IMR-90 (cell line): ENCODE measurements at regions of chr1 and their contacts with region 1.

Region 1: GRCh38 chr1:97814121-97814520 is 106.7 kb downstream of the DPYD start:
- DNase-seq: peak; percentile 54
- ATAC-seq: peak; percentile 29
- H3K4me3 ChIP-seq: no peak overlapping the region
- H3K27ac ChIP-seq: no peak overlapping the region
- H3K4me1 ChIP-seq: peaks cover 2% of the 10 kb centered on the region; the same call in 1 of the 2 replicates
- H3K27me3 ChIP-seq: no peaks in the 10 kb centered on the region
- CTCF ChIP-seq: no peak
- POLR2A ChIP-seq: no peak
- RAD21 ChIP-seq: no peak

Region 2: DNA sequence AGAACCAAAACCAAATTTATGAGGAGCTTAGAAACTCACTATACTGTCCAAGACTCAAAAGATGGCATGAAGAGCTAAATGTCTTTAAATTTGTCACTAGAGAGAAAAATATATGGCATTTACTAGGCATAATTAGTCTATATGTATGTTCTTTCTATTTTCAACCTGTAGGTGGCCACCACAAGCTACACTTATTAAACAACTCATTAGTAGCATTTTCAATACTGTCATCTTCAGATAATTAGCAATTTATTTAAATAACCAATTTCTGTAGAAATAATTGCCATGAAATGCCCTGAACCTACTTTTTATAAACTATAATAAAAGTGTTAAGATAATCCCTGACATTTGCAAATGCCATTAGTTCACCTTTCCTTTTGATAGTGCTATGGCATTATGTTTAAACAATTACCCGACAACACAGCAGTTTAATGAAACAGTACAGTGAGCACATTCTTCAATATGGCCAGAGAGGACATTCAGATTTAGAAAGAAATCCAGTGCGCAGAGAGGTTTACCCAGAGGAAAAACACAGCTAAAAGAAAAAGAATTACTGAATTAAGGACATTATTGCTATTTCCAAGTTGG is 570.1 kb before region 1 on chr1:
- CTCF ChIA-PET with region 1: no interaction called
- POLR2A ChIA-PET with region 1: no interaction called
- dilution Hi-C with region 1: no loop called
- in situ Hi-C with region 1: loop called (anchors 25 kb)
- intact Hi-C with region 1: loop called (anchors 5 kb)
- DNase-seq: peak; percentile 29
- ATAC-seq: 0 out of 2 replicates have a peak, but pooled peaks have one; percentile 51
- H3K4me3 ChIP-seq: no peak overlapping the region
- H3K27ac ChIP-seq: no peak overlapping the region
- H3K4me1 ChIP-seq: no peaks in the 10 kb centered on the region
- H3K27me3 ChIP-seq: no peaks in the 10 kb centered on the region
- CTCF ChIP-seq: peak; percentile 55
- POLR2A ChIP-seq: no peak
- RAD21 ChIP-seq: peak; percentile 63

Region 3: DNA sequence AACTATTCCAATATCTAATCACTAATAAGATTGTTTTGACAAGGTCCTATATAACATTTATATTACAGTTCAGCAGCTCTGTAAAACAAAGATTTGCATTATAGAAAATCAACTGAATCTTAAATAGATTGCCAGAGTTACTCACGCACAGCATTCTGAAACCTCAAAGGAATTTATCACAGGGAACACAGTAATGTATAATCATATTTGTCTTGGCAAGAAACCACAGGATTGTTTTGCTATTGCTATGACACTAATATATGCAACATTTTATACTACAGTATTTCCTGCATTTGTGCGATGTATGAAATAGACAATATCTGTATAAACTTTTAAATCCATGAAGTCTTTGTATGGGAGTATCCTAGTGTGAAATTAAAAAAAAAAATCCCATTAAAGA is 1089.1 kb after region 1 on chr1:
- CTCF ChIA-PET with region 1: no interaction called
- POLR2A ChIA-PET with region 1: no interaction called
- dilution Hi-C with region 1: no loop called
- in situ Hi-C with region 1: no loop called
- intact Hi-C with region 1: no loop called
- DNase-seq: peak; percentile 88
- ATAC-seq: peak; percentile 89
- H3K4me3 ChIP-seq: no peak overlapping the region
- H3K27ac ChIP-seq: no peak overlapping the region
- H3K4me1 ChIP-seq: no peaks in the 10 kb centered on the region
- H3K27me3 ChIP-seq: no peaks in the 10 kb centered on the region; the same call in 1 of the 2 replicates
- CTCF ChIP-seq: no peak
- POLR2A ChIP-seq: no peak
- RAD21 ChIP-seq: no peak